Activated naive CD4-positive, alpha-beta T cell treated with anti-CD3 and anti-CD28 coated beads, Interleukin-2, amount 10 ng/mL, durations not matched to agents 7 days and 5 days (primary cell): ENCODE measurements at regions of chr5 and their contacts with region 1.

Region 1: GRCh38 chr5:141564216-141564692 is 54.5 kb downstream of the DIAPH1 start:
- DNase-seq: peak; percentile 73
- H3K4me3 Mint-ChIP-seq: no peak overlapping the region
- H3K27ac Mint-ChIP-seq: peak overlapping the region; percentile 74
- H3K4me1 Mint-ChIP-seq: peaks cover 18% of the 10 kb centered on the region
- H3K27me3 Mint-ChIP-seq: no peaks in the 10 kb centered on the region

Region 2: DNA sequence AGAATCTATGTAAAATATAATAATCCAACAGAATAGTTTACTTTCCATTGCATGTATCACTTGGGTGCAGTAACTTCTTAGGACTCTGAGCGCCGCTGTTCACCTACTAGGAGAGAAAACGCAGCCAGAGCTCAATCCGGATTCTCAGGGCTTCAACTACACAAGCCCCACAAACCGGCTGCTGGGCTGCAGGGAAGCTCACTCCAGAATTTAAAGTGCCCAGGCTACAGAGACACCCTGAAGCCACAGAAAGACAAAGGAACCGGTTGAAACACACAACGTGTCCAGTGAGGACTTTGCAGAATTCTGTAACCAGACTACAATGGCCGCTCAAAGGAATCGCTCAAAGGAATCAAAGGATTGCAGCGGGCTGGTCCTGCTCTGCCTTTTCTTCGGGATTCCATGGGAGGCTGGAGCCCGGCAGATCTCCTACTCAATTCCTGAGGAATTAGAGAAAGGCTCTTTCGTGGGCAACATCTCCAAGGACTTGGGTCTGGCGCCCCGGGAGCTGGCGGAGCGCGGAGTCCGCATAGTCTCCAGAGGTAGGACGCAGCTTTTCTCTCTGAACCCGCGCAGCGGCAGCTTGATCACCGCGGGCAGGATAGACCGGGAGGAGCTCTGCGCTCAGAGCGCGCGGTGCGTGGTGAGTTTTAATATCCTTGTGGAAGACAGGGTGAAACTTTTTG is 151.3 kb before region 1 on chr5 and contains the start of gene PCDHGA10:
- CTCF ChIA-PET with region 1: interaction called, 10 read pairs
- DNase-seq: peak; percentile 72
- H3K4me3 Mint-ChIP-seq: peak within 1 kb of the TSS; percentile 78
- H3K27ac Mint-ChIP-seq: peak within 1 kb of the TSS; percentile 74
- H3K4me1 Mint-ChIP-seq: peaks cover 21% of the 10 kb centered on the region
- H3K27me3 Mint-ChIP-seq: peaks cover 79% of the 10 kb centered on the region

Region 3: DNA sequence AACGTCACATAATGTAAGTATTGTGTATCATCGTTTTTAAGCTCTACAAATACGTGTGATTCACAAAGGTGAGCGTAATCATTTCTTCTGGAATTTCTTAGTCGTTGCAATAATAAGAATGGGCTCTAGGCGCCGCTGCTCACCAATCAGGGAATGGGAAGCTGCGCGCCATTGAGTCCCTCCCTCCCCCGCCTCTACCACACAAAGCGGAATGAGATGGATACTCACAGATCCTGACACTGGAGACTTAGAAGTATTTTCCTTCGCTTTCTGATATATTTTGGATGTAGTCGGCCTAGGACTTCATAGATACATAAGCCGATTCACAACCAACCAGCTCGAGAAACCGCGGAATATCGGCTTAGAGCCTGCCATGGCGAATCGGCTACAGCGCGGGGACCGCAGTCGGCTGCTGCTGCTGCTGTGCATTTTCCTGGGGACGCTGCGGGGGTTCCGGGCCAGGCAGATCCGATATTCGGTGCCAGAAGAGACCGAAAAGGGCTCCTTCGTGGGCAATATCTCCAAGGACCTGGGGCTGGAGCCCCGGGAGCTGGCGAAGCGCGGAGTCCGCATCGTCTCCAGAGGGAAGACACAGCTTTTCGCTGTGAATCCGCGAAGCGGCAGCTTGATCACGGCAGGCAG is 143.3 kb before region 1 on chr5 and contains the start of gene PCDHGA11:
- CTCF ChIA-PET with region 1: interaction called, 14 read pairs
- DNase-seq: peak; percentile 52
- H3K4me3 Mint-ChIP-seq: peak within 1 kb of the TSS; percentile 76
- H3K27ac Mint-ChIP-seq: peak within 1 kb of the TSS; percentile 77
- H3K4me1 Mint-ChIP-seq: peaks cover 16% of the 10 kb centered on the region
- H3K27me3 Mint-ChIP-seq: peaks cover 69% of the 10 kb centered on the region

Region 4: DNA sequence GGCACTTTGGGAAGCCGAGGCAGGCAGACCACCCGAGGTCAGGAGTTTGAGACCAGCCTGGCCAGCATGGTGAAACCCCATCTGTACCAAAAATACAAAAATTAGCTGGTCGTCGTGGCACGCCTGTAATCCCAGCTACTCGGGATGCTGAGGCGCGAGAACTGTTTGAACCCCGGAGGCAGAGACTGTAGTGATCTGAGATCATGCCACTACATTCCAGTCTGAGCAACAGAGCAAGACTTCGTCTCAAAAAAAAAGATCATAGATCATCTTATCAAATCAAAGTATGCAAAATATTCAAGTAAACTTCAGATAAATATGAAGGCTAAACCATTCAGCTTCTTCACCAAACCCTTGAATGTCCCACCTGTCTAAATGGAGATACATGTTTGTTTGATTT is 94.4 kb before region 1 on chr5:
- CTCF ChIA-PET with region 1: no interaction called
- DNase-seq: no peak
- H3K4me3 Mint-ChIP-seq: no peak overlapping the region
- H3K27ac Mint-ChIP-seq: no peak overlapping the region
- H3K4me1 Mint-ChIP-seq: no peaks in the 10 kb centered on the region
- H3K27me3 Mint-ChIP-seq: peaks cover 15% of the 10 kb centered on the region

Region 5: DNA sequence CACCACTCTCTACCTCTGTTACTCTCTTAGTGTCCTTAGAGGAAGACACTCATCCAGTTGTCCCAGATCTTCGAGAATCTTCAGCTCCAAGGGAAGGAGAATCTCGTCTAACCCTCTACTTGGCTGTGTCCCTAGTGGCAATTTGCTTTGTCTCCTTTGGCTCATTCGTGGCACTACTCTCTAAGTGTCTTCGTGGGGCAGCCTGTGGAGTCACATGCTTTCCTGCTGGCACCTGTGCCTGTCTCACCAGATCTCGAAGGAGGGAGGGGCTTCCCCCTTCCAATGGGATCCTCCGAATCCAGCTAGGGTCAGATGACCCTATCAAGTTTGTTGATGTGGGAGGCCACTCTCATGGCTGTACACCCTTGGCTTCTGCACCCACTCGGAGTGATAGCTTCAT is 77.1 kb before region 1 on chr5:
- CTCF ChIA-PET with region 1: no interaction called
- DNase-seq: no peak
- H3K4me3 Mint-ChIP-seq: no peak overlapping the region
- H3K27ac Mint-ChIP-seq: no peak overlapping the region
- H3K4me1 Mint-ChIP-seq: peaks cover 3% of the 10 kb centered on the region
- H3K27me3 Mint-ChIP-seq: peaks cover 99% of the 10 kb centered on the region

Region 6: GRCh38 chr5:141598391-141599350 is 34.4 kb after region 1 on chr5:
- CTCF ChIA-PET with region 1: interaction called, 18 read pairs
- DNase-seq: no peak
- H3K4me3 Mint-ChIP-seq: no peak overlapping the region
- H3K27ac Mint-ChIP-seq: peak overlapping the region; percentile 76
- H3K4me1 Mint-ChIP-seq: peaks cover 80% of the 10 kb centered on the region
- H3K27me3 Mint-ChIP-seq: no peaks in the 10 kb centered on the region

Region 7: DNA sequence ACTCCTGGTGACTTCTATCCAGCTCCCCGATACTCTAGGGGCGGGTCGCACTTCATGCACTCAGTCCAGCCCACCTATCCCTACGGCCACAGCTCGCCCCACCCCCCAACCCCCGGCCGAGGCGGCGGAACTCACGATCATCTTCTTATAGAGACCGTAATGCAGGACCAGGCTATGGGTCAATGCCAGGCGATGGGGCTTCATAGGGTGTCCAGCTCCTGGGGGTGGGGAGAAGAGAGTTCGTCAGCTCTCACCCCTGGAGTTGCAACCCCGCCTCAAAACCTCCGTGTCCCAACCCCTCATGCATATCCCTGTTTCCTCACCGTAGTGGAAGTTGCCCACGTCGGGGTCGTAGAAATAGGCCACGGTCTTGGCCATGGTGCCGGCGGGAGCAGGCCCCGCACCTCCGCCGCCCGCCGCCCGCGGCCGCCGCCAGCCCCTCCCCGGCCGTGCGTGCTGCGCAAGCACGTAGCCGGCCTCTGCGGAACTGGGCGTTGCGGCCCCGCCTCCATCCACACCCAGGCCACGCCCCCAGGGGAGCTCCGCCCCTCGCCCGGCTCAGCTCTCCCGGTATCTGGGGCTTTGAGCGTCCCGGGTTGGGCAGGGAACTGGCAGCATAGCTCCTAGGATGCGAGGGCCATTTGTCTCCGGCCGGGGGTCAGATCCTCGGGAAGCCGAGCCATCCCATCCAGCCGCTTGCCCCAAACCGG is 72.3 kb after region 1 on chr5 and contains the starts of genes HDAC3 and RELL2:
- CTCF ChIA-PET with region 1: interaction called, 11 read pairs
- DNase-seq: peak; percentile 95
- H3K4me3 Mint-ChIP-seq: peak within 1 kb of the TSS; percentile 94
- H3K27ac Mint-ChIP-seq: peak within 1 kb of the TSS; percentile 88
- H3K4me1 Mint-ChIP-seq: peaks cover 40% of the 10 kb centered on the region
- H3K27me3 Mint-ChIP-seq: no peaks in the 10 kb centered on the region

Region 8: GRCh38 chr5:142115937-142116614 is 551.8 kb after region 1 on chr5:
- CTCF ChIA-PET with region 1: no interaction called
- DNase-seq: no peak
- H3K4me3 Mint-ChIP-seq: no peak overlapping the region
- H3K27ac Mint-ChIP-seq: no peak overlapping the region
- H3K4me1 Mint-ChIP-seq: peaks cover 77% of the 10 kb centered on the region
- H3K27me3 Mint-ChIP-seq: no peaks in the 10 kb centered on the region